ENCODE measurements at regions of chr9 and their contacts with region 1.

Region 1: GRCh38 chr9:114738581-114739316 is 56.8 kb upstream of the TEX48 start:
- DNase-seq: peak; percentile 43 to 88 (median 64)
- ATAC-seq: peak; percentile 72 to 85 (median 84)
- H3K4me3 ChIP-seq: no peak overlapping the region
- H3K4me3 Mint-ChIP-seq: peak overlapping the region in 1 of 3 donors; percentile 8
- H3K27ac ChIP-seq: no peak overlapping the region
- H3K27ac Mint-ChIP-seq: peak overlapping the region; percentile 91 to 92
- H3K4me1 ChIP-seq: peaks cover 2 to 25% of the 10 kb centered on the region in 2 experiments
- H3K4me1 Mint-ChIP-seq: peaks cover 39 to 45% (median 43%) of the 10 kb centered on the region in 3 donors
- H3K27me3 ChIP-seq: no peaks in the 10 kb centered on the region
- H3K27me3 Mint-ChIP-seq: no peaks in the 10 kb centered on the region

Region 2: GRCh38 chr9:114718801-114719221 is 19.9 kb before region 1 on chr9:
- CTCF ChIA-PET with region 1: interaction called in 1 of 2 experiments, 10 read pairs
- POLR2A ChIA-PET with region 1: no interaction called
- DNase-seq: peak; percentile 21 to 78 (median 50)
- ATAC-seq: peak; percentile 92 to 95 (median 93)
- H3K4me3 ChIP-seq: no peak overlapping the region
- H3K4me3 Mint-ChIP-seq: peak overlapping the region; percentile 10 to 66 (median 22)
- H3K27ac ChIP-seq: peak overlapping the region; percentile 68
- H3K27ac Mint-ChIP-seq: peak overlapping the region; percentile 92 to 95
- H3K4me1 ChIP-seq: peaks cover 0 to 43% of the 10 kb centered on the region in 2 experiments
- H3K4me1 Mint-ChIP-seq: peaks cover 34 to 56% (median 40%) of the 10 kb centered on the region in 3 donors
- H3K27me3 ChIP-seq: no peaks in the 10 kb centered on the region
- H3K27me3 Mint-ChIP-seq: peaks cover 0 to 3% of the 10 kb centered on the region in 2 donors

Region 3: GRCh38 chr9:114906908-114907571 is 168.3 kb after region 1 on chr9:
- CTCF ChIA-PET with region 1: interaction called, 16 to 25 read pairs
- POLR2A ChIA-PET with region 1: no interaction called
- DNase-seq: peak in 3 of 35 experiments; percentile 23 to 59 (median 35)
- ATAC-seq: peak in 2 of 4 experiments; percentile 19 to 26
- H3K4me3 ChIP-seq: no peak overlapping the region
- H3K4me3 Mint-ChIP-seq: peak overlapping the region in 1 of 3 donors; percentile 75
- H3K27ac ChIP-seq: peak overlapping the region; percentile 81
- H3K27ac Mint-ChIP-seq: peak overlapping the region; percentile 98
- H3K4me1 ChIP-seq: peaks cover 24 to 71% of the 10 kb centered on the region in 2 experiments
- H3K4me1 Mint-ChIP-seq: peaks cover 53 to 64% (median 58%) of the 10 kb centered on the region in 3 donors
- H3K27me3 ChIP-seq: no peaks in the 10 kb centered on the region
- H3K27me3 Mint-ChIP-seq: no peaks in the 10 kb centered on the region

Region 4: DNA sequence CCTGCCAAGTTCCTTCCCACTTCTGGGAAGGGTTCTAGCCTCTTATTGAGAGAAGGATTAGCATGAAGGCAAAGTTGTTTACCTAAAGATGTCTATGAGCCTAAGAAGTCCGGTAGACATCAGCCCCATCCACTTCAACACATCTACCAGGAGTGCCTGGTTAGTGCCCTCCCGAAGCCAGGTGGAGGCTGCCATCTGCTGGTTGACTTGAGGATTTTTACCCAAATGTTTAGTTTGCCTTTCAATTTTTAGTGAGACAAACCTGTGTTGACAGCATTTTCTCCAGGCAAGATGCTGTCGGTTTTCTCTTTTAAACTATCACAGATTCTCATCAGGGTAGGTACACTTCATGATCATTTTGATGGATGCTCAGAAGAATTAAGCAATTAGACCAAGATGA is 275.2 kb after region 1 on chr9:
- CTCF ChIA-PET with region 1: interaction called, 8 to 34 read pairs
- POLR2A ChIA-PET with region 1: no interaction called
- DNase-seq: peak; percentile 55 to 88 (median 74)
- ATAC-seq: peak; percentile 80 to 91 (median 88)
- H3K4me3 ChIP-seq: no peak overlapping the region
- H3K4me3 Mint-ChIP-seq: no peak overlapping the region
- H3K27ac ChIP-seq: no peak overlapping the region
- H3K27ac Mint-ChIP-seq: peak overlapping the region in 1 of 2 donors; percentile 28
- H3K4me1 ChIP-seq: peaks cover 0 to 5% of the 10 kb centered on the region in 2 experiments
- H3K4me1 Mint-ChIP-seq: peaks cover 17 to 19% (median 18%) of the 10 kb centered on the region in 3 donors
- H3K27me3 ChIP-seq: peaks cover 0 to 4% of the 10 kb centered on the region in 2 experiments
- H3K27me3 Mint-ChIP-seq: peaks cover 0 to 7% of the 10 kb centered on the region in 2 donors